Thyroid gland (tissue), 4 donors: ENCODE measurements at regions of chr14 and their contacts with region 1.

Region 1: GRCh38 chr14:36070031-36070719 is 106.3 kb downstream of the PTCSC3 start:
- DNase-seq: peak; percentile 90 to 93
- H3K4me3 ChIP-seq: no peak overlapping the region
- H3K27ac ChIP-seq: peak overlapping the region; percentile 62 to 89 (median 67)
- H3K4me1 ChIP-seq: peaks cover 27 to 33% of the 10 kb centered on the region in 2 donors
- H3K27me3 ChIP-seq: no peaks in the 10 kb centered on the region
- CTCF ChIP-seq: peak; percentile 29 to 91 (median 80)
- POLR2A ChIP-seq: no peak

Region 2: GRCh38 chr14:35687335-35687939 is 382.7 kb before region 1 on chr14:
- intact Hi-C with region 1: no loop called
- DNase-seq: peak; percentile 18 to 23
- H3K4me3 ChIP-seq: no peak overlapping the region
- H3K27ac ChIP-seq: no peak overlapping the region
- H3K4me1 ChIP-seq: no peaks in the 10 kb centered on the region
- H3K27me3 ChIP-seq: no peaks in the 10 kb centered on the region
- CTCF ChIP-seq: peak; percentile 23 to 83 (median 75)
- POLR2A ChIP-seq: no peak

Region 3: GRCh38 chr14:35879654-35880249 is 190.4 kb before region 1 on chr14:
- intact Hi-C with region 1: loop called (anchors 5 kb)
- DNase-seq: no peak
- H3K4me3 ChIP-seq: no peak overlapping the region
- H3K27ac ChIP-seq: no peak overlapping the region
- H3K4me1 ChIP-seq: peaks cover 0 to 4% of the 10 kb centered on the region in 2 donors
- H3K27me3 ChIP-seq: no peaks in the 10 kb centered on the region
- CTCF ChIP-seq: peak in 3 of 6 experiments; percentile 52 to 63 (median 52)
- POLR2A ChIP-seq: no peak